Calu3 (cell line): ENCODE measurements at regions of chr13 and their contacts with region 1.

Region 1: GRCh38 chr13:91078093-91078679 is 269.3 kb upstream of the MIR17HG start:
- DNase-seq: no peak
- H3K4me3 Mint-ChIP-seq: no peak overlapping the region
- H3K27ac Mint-ChIP-seq: no peak overlapping the region
- H3K4me1 Mint-ChIP-seq: no peaks in the 10 kb centered on the region
- H3K27me3 Mint-ChIP-seq: no peaks in the 10 kb centered on the region
- CTCF ChIP-seq: no peak

Region 2: DNA sequence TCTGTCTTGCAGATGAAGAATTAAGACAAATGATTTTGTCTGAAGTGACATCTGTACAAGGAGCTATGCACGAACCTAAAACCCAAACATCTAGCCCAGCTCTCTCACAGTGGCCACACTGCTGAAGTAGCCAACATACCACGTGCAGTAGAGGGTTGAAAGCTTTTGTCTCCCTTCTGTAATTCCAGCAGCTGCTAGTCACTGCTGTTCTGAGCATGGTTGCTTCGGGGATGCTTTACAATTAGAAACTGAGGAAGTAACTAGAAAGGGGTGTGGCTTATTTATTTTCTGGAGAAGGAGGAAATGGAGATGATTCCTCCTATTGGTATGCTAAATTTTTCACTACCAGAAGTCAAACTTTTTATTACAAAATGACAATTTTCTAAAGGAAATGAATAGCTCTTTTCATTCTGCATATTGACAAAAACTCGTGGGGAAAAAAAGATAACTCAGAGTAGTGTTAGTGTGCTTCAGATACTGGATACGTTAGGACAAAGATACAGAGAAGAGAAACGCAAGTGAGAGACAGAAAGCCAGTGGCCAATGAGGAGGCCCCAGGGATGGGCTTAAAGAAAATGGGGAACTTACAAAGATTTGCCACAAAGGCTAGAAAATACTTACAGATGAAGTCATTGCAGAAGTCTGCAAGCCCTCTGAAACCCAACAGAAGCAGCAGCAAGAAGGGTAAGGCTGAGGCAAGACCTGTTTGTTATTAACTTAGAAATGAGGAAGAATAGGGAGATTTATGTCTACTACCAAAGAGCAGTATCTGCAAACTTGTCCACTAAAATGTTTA is 76.6 kb after region 1 on chr13:
- CTCF ChIA-PET with region 1: no interaction called
- intact Hi-C with region 1: loop called (anchors 2 kb)
- DNase-seq: no peak
- H3K4me3 Mint-ChIP-seq: peak overlapping the region; percentile 50
- H3K27ac Mint-ChIP-seq: peak overlapping the region; percentile 79
- H3K4me1 Mint-ChIP-seq: peaks cover 9% of the 10 kb centered on the region
- H3K27me3 Mint-ChIP-seq: no peaks in the 10 kb centered on the region
- CTCF ChIP-seq: no peak

Region 3: DNA sequence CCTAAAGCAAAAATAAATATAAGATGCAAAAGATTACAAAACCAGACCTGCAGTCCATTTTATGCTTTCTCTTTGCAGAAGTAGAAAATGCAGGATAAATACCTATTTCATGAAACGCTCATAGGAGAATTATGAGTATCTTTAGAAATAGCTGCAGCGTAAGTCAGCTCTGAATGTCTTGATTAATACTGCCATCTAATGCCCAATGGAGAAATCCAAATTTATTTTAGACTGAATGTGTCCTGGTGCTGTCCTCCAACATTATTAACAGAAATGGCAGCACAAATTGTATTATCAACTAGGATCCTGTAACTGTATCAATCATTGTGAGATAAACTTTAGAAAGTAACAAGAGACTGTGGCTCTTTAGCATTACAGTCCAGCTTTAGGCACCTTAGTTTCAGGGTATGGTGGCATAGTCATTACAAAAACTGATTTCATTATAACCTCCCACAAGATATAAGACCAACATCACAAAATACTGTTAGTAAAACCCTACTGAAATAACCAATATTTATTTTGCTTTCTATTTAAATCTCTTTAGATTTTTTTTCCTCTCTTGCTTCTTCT is 107.2 kb after region 1 on chr13:
- CTCF ChIA-PET with region 1: interaction called, 13 read pairs
- intact Hi-C with region 1: loop called (anchors 10 kb)
- DNase-seq: no peak
- H3K4me3 Mint-ChIP-seq: no peak overlapping the region
- H3K27ac Mint-ChIP-seq: no peak overlapping the region
- H3K4me1 Mint-ChIP-seq: no peaks in the 10 kb centered on the region
- H3K27me3 Mint-ChIP-seq: no peaks in the 10 kb centered on the region
- CTCF ChIP-seq: no peak

Region 4: GRCh38 chr13:91203430-91203829 is 125.2 kb after region 1 on chr13:
- CTCF ChIA-PET with region 1: no interaction called
- intact Hi-C with region 1: no loop called
- DNase-seq: no peak
- H3K4me3 Mint-ChIP-seq: no peak overlapping the region
- H3K27ac Mint-ChIP-seq: no peak overlapping the region
- H3K4me1 Mint-ChIP-seq: no peaks in the 10 kb centered on the region
- H3K27me3 Mint-ChIP-seq: no peaks in the 10 kb centered on the region
- CTCF ChIP-seq: no peak

Region 5: DNA sequence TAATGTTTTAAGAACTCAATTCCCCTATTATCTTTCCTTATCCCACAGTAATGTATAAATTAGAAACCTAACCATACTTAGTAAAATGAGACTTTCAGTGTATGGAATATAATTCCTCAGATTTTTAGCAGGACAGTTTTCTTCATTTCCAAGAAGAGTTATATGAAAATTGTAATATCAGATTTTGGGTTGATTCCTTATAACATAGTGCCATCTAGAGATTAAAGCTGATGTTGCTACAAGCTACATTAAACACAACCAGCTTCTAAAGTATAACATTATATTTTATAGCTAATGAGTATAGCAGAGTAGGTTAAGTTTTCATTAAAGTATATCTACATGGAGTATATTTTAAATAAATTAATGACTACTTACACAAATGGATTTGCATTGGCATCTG is 169.6 kb after region 1 on chr13:
- CTCF ChIA-PET with region 1: no interaction called
- intact Hi-C with region 1: loop called (anchors 5 kb)
- DNase-seq: no peak
- H3K4me3 Mint-ChIP-seq: no peak overlapping the region
- H3K27ac Mint-ChIP-seq: no peak overlapping the region
- H3K4me1 Mint-ChIP-seq: no peaks in the 10 kb centered on the region
- H3K27me3 Mint-ChIP-seq: no peaks in the 10 kb centered on the region
- CTCF ChIP-seq: no peak